Activated T-helper 1 cell treated with anti-CD3 and anti-CD28 coated beads, Interleukin-12 subunit alpha, Interleukin-12 subunit beta, Interleukin-2, Interleukin-4 antibody, amounts not matched to agents 30 ng/mL and 10 ng/mL and 1 ng/mL, durations not matched to agents 14 hours and 24 hours and 36 hours (primary cell): ENCODE measurements at regions of chr7 and their contacts with region 1.

Region 1: GRCh38 chr7:43325595-43325994 is 213.1 kb downstream of the HECW1 start:
- DNase-seq: no peak
- H3K4me3 Mint-ChIP-seq: no peak overlapping the region
- H3K27ac Mint-ChIP-seq: no peak overlapping the region
- H3K4me1 Mint-ChIP-seq: no peaks in the 10 kb centered on the region
- H3K27me3 Mint-ChIP-seq: no peaks in the 10 kb centered on the region

Region 2: GRCh38 chr7:43341132-43341531 is 15.5 kb after region 1 on chr7:
- intact Hi-C with region 1: loop called (anchors 1 kb)
- DNase-seq: no peak
- H3K4me3 Mint-ChIP-seq: no peak overlapping the region
- H3K27ac Mint-ChIP-seq: no peak overlapping the region
- H3K4me1 Mint-ChIP-seq: no peaks in the 10 kb centered on the region
- H3K27me3 Mint-ChIP-seq: peaks cover 6% of the 10 kb centered on the region

Region 3: GRCh38 chr7:43377196-43377960 is 51.8 kb after region 1 on chr7:
- intact Hi-C with region 1: no loop called
- DNase-seq: no peak
- H3K4me3 Mint-ChIP-seq: no peak overlapping the region
- H3K27ac Mint-ChIP-seq: no peak overlapping the region
- H3K4me1 Mint-ChIP-seq: no peaks in the 10 kb centered on the region
- H3K27me3 Mint-ChIP-seq: peaks cover 7% of the 10 kb centered on the region

Region 4: GRCh38 chr7:43431020-43431595 is 105.5 kb after region 1 on chr7:
- intact Hi-C with region 1: no loop called
- DNase-seq: no peak
- H3K4me3 Mint-ChIP-seq: no peak overlapping the region
- H3K27ac Mint-ChIP-seq: no peak overlapping the region
- H3K4me1 Mint-ChIP-seq: no peaks in the 10 kb centered on the region
- H3K27me3 Mint-ChIP-seq: peaks cover 1% of the 10 kb centered on the region